PC-3 (cell line): ENCODE measurements at regions of chr2 and their contacts with region 1.

Region 1: GRCh38 chr2:42443718-42444399 is 49.9 kb downstream of the KCNG3 start:
- DNase-seq: no peak
- ATAC-seq: no peak
- H3K4me3 ChIP-seq: no peak overlapping the region
- H3K27ac ChIP-seq: peak overlapping the region; percentile 75
- H3K4me1 ChIP-seq: peaks cover 22% of the 10 kb centered on the region
- H3K27me3 ChIP-seq: no peaks in the 10 kb centered on the region
- CTCF ChIP-seq: no peak

Region 2: GRCh38 chr2:42360890-42361727 is 82.8 kb before region 1 on chr2 and contains the start of gene COX7A2L:
- CTCF ChIA-PET with region 1: no interaction called
- POLR2A ChIA-PET with region 1: no interaction called
- intact Hi-C with region 1: loop called (anchors 2 kb)
- DNase-seq: peak; percentile 96
- ATAC-seq: peak; percentile 91
- H3K4me3 ChIP-seq: peak within 1 kb of the TSS; percentile 98
- H3K27ac ChIP-seq: peak within 1 kb of the TSS; percentile 90
- H3K4me1 ChIP-seq: peaks cover 21% of the 10 kb centered on the region; the same call in 1 of the 2 replicates
- H3K27me3 ChIP-seq: no peaks in the 10 kb centered on the region
- CTCF ChIP-seq: 0 out of 2 replicates have a peak, but pooled peaks have one; percentile 28
- total RNA-seq, gene COX7A2L: 106 and 120 TPM in 2 replicates

Region 3: DNA sequence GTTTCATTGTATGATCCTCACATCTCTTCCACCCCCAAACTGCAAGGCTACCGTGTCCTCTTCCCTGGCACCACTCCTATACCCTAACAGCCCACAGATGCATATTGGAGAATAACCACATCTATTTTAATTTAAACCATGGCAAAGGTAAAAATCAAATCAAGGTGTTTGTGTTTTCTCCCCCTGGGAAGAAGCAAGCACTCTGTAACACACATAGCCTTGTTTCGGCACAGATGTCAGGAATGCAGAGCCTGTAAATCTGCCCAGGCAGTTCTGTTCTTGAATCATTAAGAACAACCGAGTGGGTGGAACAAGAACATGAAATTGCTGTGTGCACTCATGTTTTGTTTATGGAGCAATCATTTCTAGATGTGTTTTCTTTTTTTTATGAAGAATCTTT is 76.0 kb before region 1 on chr2:
- CTCF ChIA-PET with region 1: no interaction called
- POLR2A ChIA-PET with region 1: no interaction called
- intact Hi-C with region 1: loop called (anchors 2 kb)
- DNase-seq: no peak
- ATAC-seq: no peak
- H3K4me3 ChIP-seq: no peak overlapping the region
- H3K27ac ChIP-seq: no peak overlapping the region
- H3K4me1 ChIP-seq: peaks cover 14% of the 10 kb centered on the region
- H3K27me3 ChIP-seq: no peaks in the 10 kb centered on the region
- CTCF ChIP-seq: no peak

Region 4: GRCh38 chr2:42404676-42405075 is 39.2 kb before region 1 on chr2:
- CTCF ChIA-PET with region 1: no interaction called
- POLR2A ChIA-PET with region 1: no interaction called
- intact Hi-C with region 1: no loop called
- DNase-seq: no peak
- ATAC-seq: no peak
- H3K4me3 ChIP-seq: no peak overlapping the region
- H3K27ac ChIP-seq: no peak overlapping the region
- H3K4me1 ChIP-seq: no peaks in the 10 kb centered on the region
- H3K27me3 ChIP-seq: no peaks in the 10 kb centered on the region
- CTCF ChIP-seq: no peak

Region 5: GRCh38 chr2:42424033-42424432 is 19.8 kb before region 1 on chr2:
- CTCF ChIA-PET with region 1: no interaction called
- POLR2A ChIA-PET with region 1: no interaction called
- intact Hi-C with region 1: loop called (anchors 1 kb)
- DNase-seq: no peak
- ATAC-seq: no peak
- H3K4me3 ChIP-seq: no peak overlapping the region
- H3K27ac ChIP-seq: no peak overlapping the region
- H3K4me1 ChIP-seq: peaks cover 22% of the 10 kb centered on the region
- H3K27me3 ChIP-seq: no peaks in the 10 kb centered on the region
- CTCF ChIP-seq: no peak

Region 6: DNA sequence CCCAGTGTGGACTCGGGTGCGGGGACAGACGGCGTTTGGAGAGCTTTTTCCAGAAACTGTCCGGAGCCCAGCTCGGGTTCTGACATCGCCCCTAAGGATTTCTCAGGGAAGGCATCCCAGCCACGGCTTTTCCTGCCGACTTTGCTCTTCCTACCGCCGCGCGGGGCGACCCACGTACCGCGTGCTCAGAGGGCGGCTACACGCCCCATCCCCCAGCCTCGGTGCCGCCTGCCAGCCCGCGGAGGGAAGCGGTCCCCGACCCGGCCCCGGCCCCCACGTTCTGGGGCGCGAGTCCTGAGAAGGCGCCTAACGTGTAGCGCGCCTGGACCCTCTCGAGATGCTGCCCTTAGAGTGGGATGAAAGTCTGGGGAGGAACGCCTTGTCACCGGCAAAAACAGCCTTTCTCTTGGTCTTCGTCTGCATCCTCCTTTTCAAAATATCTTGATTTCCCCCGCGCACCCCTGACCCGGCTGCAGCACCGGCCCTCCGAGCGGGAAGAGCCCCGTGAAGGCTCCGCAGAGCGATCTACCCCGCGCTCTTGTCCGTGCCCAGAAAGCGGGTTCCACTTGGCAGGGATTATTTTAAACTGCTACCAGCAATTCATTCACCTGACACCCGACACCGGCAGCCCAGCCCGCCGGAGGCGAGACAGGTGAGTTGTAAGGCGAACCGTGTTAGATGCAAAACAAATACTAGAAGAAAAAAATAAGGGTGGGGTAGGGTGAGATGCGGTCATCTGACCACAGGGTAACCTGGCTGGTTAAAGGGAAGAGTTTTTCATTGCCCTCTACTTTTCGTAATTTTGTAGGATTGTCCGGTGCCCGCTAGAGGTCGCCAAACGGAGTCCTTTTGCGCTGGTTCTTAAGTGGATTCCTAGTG is 50.7 kb after region 1 on chr2:
- CTCF ChIA-PET with region 1: no interaction called
- POLR2A ChIA-PET with region 1: no interaction called
- intact Hi-C with region 1: loop called (anchors 1 kb)
- DNase-seq: peak; percentile 95
- ATAC-seq: peak; percentile 76
- H3K4me3 ChIP-seq: peak overlapping the region; percentile 75
- H3K27ac ChIP-seq: peak overlapping the region; percentile 71
- H3K4me1 ChIP-seq: peaks cover 15% of the 10 kb centered on the region
- H3K27me3 ChIP-seq: no peaks in the 10 kb centered on the region
- CTCF ChIP-seq: peak; percentile 90

Region 7: DNA sequence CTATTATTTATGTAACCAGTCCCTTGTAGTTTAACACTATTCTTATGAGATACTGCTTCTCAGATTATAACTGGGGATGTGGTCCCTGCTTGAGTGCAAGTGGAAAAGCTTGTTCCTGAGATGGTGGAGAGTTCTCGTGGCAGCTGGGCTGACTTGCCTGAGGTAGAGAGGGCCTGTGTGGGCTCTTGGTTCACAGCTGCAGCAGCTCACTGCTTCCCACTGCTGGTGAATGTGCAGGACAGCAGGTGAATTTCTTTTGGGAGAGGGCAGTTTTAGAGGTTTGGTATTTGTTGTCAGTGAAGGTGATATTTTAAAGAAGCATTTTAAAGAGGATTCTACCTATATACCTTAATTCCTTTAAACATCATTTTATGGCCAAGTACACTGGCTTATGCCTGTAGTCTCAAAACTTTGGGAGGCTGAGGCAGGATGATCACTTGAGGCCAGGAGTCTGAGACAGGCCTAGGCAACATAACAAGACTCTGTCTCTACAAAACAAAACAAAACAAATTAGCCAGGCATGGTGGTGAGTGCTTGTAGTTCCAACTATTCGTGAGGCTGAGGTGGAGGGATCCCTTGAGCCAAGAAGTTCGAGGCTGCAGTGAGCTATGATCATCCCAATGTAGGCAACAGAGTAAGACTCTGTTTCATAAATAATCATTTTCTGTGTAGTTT is 219.4 kb after region 1 on chr2:
- CTCF ChIA-PET with region 1: no interaction called
- POLR2A ChIA-PET with region 1: no interaction called
- intact Hi-C with region 1: loop called (anchors 5 kb)
- DNase-seq: peak; percentile 81
- ATAC-seq: peak; percentile 93
- H3K4me3 ChIP-seq: no peak overlapping the region
- H3K27ac ChIP-seq: no peak overlapping the region
- H3K4me1 ChIP-seq: no peaks in the 10 kb centered on the region
- H3K27me3 ChIP-seq: no peaks in the 10 kb centered on the region
- CTCF ChIP-seq: peak; percentile 97